Lower lobe of right lung (tissue), 2 donors: ENCODE measurements at regions of chr3 and their contacts with region 1.

Region 1: GRCh38 chr3:155701882-155702465 is 42.9 kb downstream of the PLCH1 start:
- DNase-seq: no peak
- ATAC-seq: peak; percentile 81 to 91
- H3K4me3 ChIP-seq: no peak overlapping the region
- H3K27ac ChIP-seq: no peak overlapping the region
- H3K4me1 ChIP-seq: peaks cover 4% of the 10 kb centered on the region
- H3K27me3 ChIP-seq: no peaks in the 10 kb centered on the region
- CTCF ChIP-seq: peak; percentile 67

Region 2: DNA sequence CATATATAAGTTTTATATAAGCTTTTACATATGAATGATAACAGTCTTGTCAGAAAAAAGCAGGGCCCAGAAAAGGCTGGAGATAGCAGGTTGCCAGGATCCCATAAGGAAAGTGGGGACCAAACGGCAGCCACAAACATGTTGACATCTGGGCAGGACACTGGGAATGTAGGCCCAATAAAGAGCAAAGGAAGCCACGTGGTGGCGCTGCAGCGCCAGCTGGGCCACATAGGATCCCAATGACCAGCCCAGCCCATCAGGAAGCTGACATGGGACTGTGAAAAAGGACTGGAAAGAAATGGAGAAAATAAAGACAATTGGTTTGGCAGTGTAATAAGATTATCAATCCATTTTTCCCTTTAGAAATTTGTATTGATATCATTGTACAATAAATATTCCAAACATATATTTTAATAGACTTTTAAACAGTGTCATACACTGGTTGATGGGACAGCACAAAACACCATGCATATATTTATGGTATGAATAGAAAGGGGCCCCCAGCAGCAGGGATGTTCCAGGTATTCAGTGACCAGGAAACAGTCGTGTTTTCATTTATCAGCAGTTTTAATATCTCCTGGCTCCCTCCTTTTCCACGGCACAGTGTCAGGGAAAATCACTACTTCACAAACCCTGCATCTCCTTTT is 319.5 kb before region 1 on chr3:
- intact Hi-C with region 1: loop called (anchors 10 kb)
- DNase-seq: peak; percentile 81
- ATAC-seq: peak; percentile 85 to 93
- H3K4me3 ChIP-seq: no peak overlapping the region
- H3K27ac ChIP-seq: no peak overlapping the region
- H3K4me1 ChIP-seq: no peaks in the 10 kb centered on the region
- H3K27me3 ChIP-seq: no peaks in the 10 kb centered on the region
- CTCF ChIP-seq: peak; percentile 63

Region 3: GRCh38 chr3:155912579-155913190 is 210.7 kb after region 1 on chr3:
- intact Hi-C with region 1: no loop called
- DNase-seq: no peak
- ATAC-seq: peak in 1 of 2 donors; percentile 51
- H3K4me3 ChIP-seq: no peak overlapping the region
- H3K27ac ChIP-seq: no peak overlapping the region
- H3K4me1 ChIP-seq: no peaks in the 10 kb centered on the region
- H3K27me3 ChIP-seq: no peaks in the 10 kb centered on the region
- CTCF ChIP-seq: no peak